AG04449 (cell line): ENCODE measurements at regions of chr9 and their contacts with region 1.

Region 1: DNA sequence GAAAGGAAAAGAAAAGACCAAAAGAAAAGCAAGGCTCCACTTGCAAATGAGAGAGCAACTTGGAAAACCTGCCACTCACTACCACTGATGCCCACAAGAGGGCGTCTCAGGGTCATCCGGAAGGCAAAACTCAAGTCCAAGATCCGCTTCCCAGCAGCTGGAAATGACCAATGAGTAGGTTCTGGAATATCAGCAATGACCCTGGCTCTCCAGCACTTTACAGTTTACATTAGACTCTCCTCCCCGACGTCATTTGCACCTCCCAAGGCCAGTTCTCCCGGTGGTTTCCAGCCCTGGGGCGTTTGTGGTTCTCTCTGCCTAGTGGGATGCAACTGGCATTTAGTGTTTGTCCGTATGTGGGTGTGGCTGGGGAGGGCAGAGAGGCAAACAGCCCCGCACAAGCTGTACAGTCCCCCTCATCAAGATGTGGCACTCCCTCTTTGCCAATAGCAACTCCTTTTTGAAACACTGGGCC is 193.8 kb upstream of the ZNF618 start:
- DNase-seq: no peak
- H3K4me3 ChIP-seq: no peak overlapping the region
- CTCF ChIP-seq: peak; percentile 88

Region 2: GRCh38 chr9:113632776-113633590 is 49.4 kb before region 1 on chr9:
- CTCF ChIA-PET with region 1: no interaction called
- POLR2A ChIA-PET with region 1: no interaction called
- DNase-seq: no peak
- H3K4me3 ChIP-seq: no peak overlapping the region
- CTCF ChIP-seq: no peak

Region 3: GRCh38 chr9:113669522-113670115 is 12.7 kb before region 1 on chr9:
- CTCF ChIA-PET with region 1: interaction called, 18 read pairs
- POLR2A ChIA-PET with region 1: no interaction called
- DNase-seq: no peak
- H3K4me3 ChIP-seq: no peak overlapping the region
- CTCF ChIP-seq: no peak

Region 4: GRCh38 chr9:113876151-113876992 is 194.0 kb after region 1 on chr9 and contains the start of gene ZNF618:
- CTCF ChIA-PET with region 1: interaction called, 10 read pairs
- POLR2A ChIA-PET with region 1: no interaction called
- DNase-seq: no peak
- H3K4me3 ChIP-seq: peak within 1 kb of the TSS; percentile 68
- CTCF ChIP-seq: no peak

Region 5: DNA sequence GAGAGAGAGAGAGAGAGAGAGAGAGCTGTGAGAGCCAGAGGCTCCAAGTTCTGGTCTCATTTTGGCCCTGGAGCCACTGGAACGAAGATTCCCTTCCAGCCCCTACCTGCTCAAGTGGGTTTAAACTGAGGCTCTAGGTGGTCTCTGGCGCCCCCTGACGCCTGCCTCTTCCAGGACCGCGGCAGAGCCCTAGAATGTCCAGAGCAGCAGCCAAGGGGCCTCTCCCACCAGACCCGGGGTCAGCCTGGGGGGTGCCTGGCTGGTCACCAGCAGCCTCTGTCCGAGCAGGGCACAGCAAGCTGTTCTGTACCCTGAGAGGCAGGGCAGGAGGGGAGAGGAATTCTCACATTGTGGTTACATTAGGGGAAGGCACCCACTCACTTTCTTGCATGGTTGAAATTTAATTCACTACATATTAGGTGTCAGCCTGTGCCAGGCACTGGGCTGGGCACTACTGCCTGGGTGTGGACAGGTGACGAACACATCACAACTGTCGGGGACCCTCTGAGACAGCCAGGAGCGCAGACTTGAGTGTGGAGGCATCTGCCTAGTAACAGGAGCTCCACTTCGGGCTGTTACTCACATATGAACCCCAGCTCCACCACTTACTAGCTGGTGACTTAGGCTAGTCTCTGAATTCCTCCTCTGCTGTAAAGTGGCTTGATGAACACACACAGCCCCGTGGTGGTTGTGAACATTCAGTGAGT is 351.2 kb after region 1 on chr9:
- CTCF ChIA-PET with region 1: interaction called, 11 read pairs
- POLR2A ChIA-PET with region 1: no interaction called
- DNase-seq: no peak
- H3K4me3 ChIP-seq: no peak overlapping the region
- CTCF ChIP-seq: peak; percentile 62